Activated naive CD4-positive, alpha-beta T cell treated with anti-CD3 and anti-CD28 coated beads for 36 hours (primary cell): ENCODE measurements at regions of chr5 and their contacts with region 1.

Region 1: GRCh38 chr5:81851481-81852178 is 100.7 kb upstream of the SSBP2 start:
- DNase-seq: peak; percentile 91
- H3K4me3 Mint-ChIP-seq: peak overlapping the region; percentile 86
- H3K27ac Mint-ChIP-seq: peak overlapping the region; percentile 92
- H3K4me1 Mint-ChIP-seq: peaks cover 40% of the 10 kb centered on the region
- H3K27me3 Mint-ChIP-seq: no peaks in the 10 kb centered on the region

Region 2: GRCh38 chr5:81420039-81420667 is 431.5 kb before region 1 on chr5:
- CTCF ChIA-PET with region 1: interaction called, 3 read pairs
- intact Hi-C with region 1: loop called (anchors 1 kb)
- DNase-seq: peak; percentile 36
- H3K4me3 Mint-ChIP-seq: no peak overlapping the region
- H3K27ac Mint-ChIP-seq: no peak overlapping the region
- H3K4me1 Mint-ChIP-seq: peaks cover 13% of the 10 kb centered on the region
- H3K27me3 Mint-ChIP-seq: no peaks in the 10 kb centered on the region

Region 3: GRCh38 chr5:81533629-81534405 is 317.8 kb before region 1 on chr5:
- CTCF ChIA-PET with region 1: interaction called, 3 read pairs
- intact Hi-C with region 1: loop called (anchors 1 kb)
- DNase-seq: no peak
- H3K4me3 Mint-ChIP-seq: no peak overlapping the region
- H3K27ac Mint-ChIP-seq: no peak overlapping the region
- H3K4me1 Mint-ChIP-seq: peaks cover 46% of the 10 kb centered on the region
- H3K27me3 Mint-ChIP-seq: no peaks in the 10 kb centered on the region

Region 4: DNA sequence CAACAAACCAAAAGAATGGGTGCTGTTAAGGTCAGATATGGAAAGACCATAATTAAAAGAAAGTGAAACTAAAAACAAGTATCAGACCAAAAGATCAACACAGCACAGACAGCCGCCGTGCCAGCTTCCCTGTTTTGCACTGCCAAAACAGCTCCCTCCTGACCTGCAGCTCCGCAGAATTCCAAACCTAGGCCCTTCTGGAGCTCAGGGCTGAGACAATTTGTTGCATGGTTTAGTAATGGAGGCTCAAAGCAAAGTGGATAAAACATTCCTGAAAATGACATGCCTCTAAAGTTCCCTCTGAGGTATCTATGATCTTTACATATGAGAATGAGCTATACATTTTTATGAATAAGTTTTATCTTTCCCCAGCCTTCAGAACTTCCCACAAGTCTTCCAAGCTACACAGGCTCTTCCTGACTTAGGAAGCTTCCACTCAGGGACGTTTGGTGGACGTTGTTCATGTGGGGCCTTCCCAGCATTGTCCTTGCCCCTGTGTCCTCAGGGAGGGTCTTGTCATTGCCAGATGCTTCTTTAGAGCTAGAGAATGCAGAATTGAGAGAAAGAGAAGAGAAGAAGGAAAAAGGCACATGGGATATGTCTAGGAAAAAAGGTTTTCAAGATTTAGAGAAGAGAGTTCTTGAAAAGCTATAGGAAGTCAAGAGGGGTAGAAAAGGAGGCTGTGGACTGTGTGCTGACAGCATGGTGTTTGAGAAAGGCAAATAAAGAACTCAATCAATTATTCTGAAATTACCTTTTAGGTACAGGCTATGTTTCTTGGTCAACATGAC is 72.3 kb before region 1 on chr5:
- CTCF ChIA-PET with region 1: interaction called, 4 read pairs
- intact Hi-C with region 1: loop called (anchors 1 kb)
- DNase-seq: peak; percentile 51
- H3K4me3 Mint-ChIP-seq: peak overlapping the region; percentile 73
- H3K27ac Mint-ChIP-seq: peak overlapping the region; percentile 83
- H3K4me1 Mint-ChIP-seq: peaks cover 16% of the 10 kb centered on the region
- H3K27me3 Mint-ChIP-seq: no peaks in the 10 kb centered on the region

Region 5: GRCh38 chr5:81895307-81895706 is 43.7 kb after region 1 on chr5:
- CTCF ChIA-PET with region 1: no interaction called
- intact Hi-C with region 1: no loop called
- DNase-seq: no peak
- H3K4me3 Mint-ChIP-seq: no peak overlapping the region
- H3K27ac Mint-ChIP-seq: no peak overlapping the region
- H3K4me1 Mint-ChIP-seq: no peaks in the 10 kb centered on the region
- H3K27me3 Mint-ChIP-seq: no peaks in the 10 kb centered on the region

Region 6: DNA sequence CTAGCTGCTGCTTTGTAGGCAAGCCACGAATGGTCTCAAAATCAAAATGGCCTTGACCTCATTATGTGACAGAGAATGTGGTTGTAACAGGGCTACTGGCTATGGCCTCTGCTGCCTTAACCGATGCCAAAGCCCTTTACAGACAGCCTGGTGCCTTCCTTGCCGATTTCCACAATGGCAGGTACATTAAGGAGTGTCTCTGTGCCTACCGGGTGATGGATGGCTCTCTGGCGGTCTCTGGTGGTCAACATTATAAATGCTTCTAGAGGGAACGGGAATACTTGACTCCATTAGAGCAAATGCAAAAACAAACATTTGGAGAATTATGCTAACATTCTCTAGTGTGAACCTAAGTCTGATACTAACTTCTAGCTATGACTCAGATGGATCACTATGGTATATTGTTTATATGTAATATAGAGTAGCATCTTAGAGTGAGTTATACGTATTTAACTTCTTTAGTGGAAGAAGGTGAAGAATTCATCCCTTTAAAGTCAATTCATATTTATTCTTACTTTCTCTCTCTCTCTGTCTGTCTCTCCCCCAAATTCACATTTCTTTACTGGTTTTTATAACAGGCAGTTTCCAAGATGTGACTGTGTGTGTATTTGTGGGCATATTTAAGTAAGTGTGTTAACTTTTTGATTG is 374.0 kb after region 1 on chr5:
- CTCF ChIA-PET with region 1: no interaction called
- intact Hi-C with region 1: loop called (anchors 5 kb)
- DNase-seq: peak; percentile 79
- H3K4me3 Mint-ChIP-seq: no peak overlapping the region
- H3K27ac Mint-ChIP-seq: no peak overlapping the region
- H3K4me1 Mint-ChIP-seq: peaks cover 3% of the 10 kb centered on the region
- H3K27me3 Mint-ChIP-seq: no peaks in the 10 kb centered on the region